CD4-positive, alpha-beta memory T cell (primary cell): ENCODE measurements at regions of chr22 and their contacts with region 1.

Region 1: GRCh38 chr22:39946503-39947219 is 13.5 kb upstream of the TMA7B start:
- DNase-seq: no peak
- H3K4me3 ChIP-seq: no peak overlapping the region
- H3K4me3 Mint-ChIP-seq: peak overlapping the region; percentile 29 to 62 (median 43)
- H3K27ac ChIP-seq: peak overlapping the region; percentile 6
- H3K27ac Mint-ChIP-seq: peak overlapping the region in 6 of 7 donors; percentile 60 to 94 (median 86)
- H3K4me1 ChIP-seq: peaks cover 100% of the 10 kb centered on the region
- H3K4me1 Mint-ChIP-seq: peaks cover 76 to 100% (median 90%) of the 10 kb centered on the region in 4 donors
- H3K27me3 ChIP-seq: no peaks in the 10 kb centered on the region
- H3K27me3 Mint-ChIP-seq: no peaks in the 10 kb centered on the region

Region 2: GRCh38 chr22:39559454-39560105 is 387.1 kb before region 1 on chr22:
- CTCF ChIA-PET with region 1: interaction called, 5 read pairs
- POLR2A ChIA-PET with region 1: no interaction called
- intact Hi-C with region 1: loop called (anchors 10 kb)
- DNase-seq: no peak
- H3K4me3 ChIP-seq: no peak overlapping the region
- H3K4me3 Mint-ChIP-seq: peak overlapping the region in 1 of 8 donors; percentile 23
- H3K27ac ChIP-seq: no peak overlapping the region
- H3K27ac Mint-ChIP-seq: no peak overlapping the region
- H3K4me1 ChIP-seq: peaks cover 6% of the 10 kb centered on the region
- H3K4me1 Mint-ChIP-seq: peaks cover 0 to 9% (median 2%) of the 10 kb centered on the region in 4 donors
- H3K27me3 ChIP-seq: peaks cover 21% of the 10 kb centered on the region
- H3K27me3 Mint-ChIP-seq: peaks cover 19 to 26% of the 10 kb centered on the region in 2 donors

Region 3: DNA sequence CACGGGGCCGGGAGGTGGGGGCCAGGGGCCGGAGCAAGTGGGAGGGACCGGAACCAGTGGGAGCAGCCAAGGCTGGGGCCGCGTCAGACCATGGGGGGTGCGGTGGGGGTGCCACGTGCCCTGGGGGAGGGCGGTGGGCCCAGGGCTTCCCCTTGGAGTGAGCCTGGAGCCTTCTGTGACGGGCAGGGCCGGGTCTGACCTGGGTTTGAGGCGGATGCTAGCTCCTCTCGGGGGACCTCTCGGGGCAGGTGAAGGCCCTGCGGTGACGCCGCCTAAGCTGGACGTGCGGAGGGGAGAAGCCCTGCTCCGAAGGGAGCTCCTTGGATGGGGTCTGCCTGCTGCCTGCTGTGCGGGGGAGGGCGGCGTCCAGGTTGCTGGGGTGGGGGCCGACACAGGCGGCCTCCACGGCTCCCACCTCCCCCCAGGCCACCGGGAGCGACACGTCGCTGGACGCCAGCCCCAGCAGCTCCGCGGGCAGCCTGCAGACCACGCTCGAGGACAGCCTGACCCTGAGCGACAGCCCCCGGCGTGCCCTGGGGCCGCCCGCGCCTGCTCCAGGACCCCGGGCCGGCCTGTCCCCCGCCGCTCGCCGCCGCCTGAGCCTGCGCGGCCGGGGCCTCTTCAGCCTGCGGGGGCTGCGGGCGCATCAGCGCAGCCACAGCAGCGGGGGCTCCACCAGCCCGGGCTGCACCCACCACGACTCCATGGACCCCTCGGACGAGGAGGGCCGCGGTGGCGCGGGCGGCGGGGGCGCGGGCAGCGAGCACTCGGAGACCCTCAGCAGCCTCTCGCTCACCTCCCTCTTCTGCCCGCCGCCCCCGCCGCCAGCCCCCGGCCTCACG is 261.1 kb before region 1 on chr22:
- CTCF ChIA-PET with region 1: no interaction called
- POLR2A ChIA-PET with region 1: no interaction called
- intact Hi-C with region 1: loop called (anchors 10 kb)
- DNase-seq: no peak
- H3K4me3 ChIP-seq: no peak overlapping the region
- H3K4me3 Mint-ChIP-seq: no peak overlapping the region
- H3K27ac ChIP-seq: no peak overlapping the region
- H3K27ac Mint-ChIP-seq: no peak overlapping the region
- H3K4me1 ChIP-seq: no peaks in the 10 kb centered on the region
- H3K4me1 Mint-ChIP-seq: peaks cover 0 to 7% (median 5%) of the 10 kb centered on the region in 4 donors
- H3K27me3 ChIP-seq: no peaks in the 10 kb centered on the region
- H3K27me3 Mint-ChIP-seq: no peaks in the 10 kb centered on the region

Region 4: GRCh38 chr22:39927544-39927943 is 19.1 kb before region 1 on chr22:
- CTCF ChIA-PET with region 1: interaction called, 17 read pairs
- POLR2A ChIA-PET with region 1: interaction called, 9 read pairs
- intact Hi-C with region 1: no loop called
- DNase-seq: no peak
- H3K4me3 ChIP-seq: peak overlapping the region; percentile 22 to 27
- H3K4me3 Mint-ChIP-seq: no peak overlapping the region
- H3K27ac ChIP-seq: peak overlapping the region; percentile 49
- H3K27ac Mint-ChIP-seq: peak overlapping the region in 1 of 7 donors; percentile 92
- H3K4me1 ChIP-seq: peaks cover 100% of the 10 kb centered on the region
- H3K4me1 Mint-ChIP-seq: peaks cover 36 to 42% (median 40%) of the 10 kb centered on the region in 4 donors
- H3K27me3 ChIP-seq: no peaks in the 10 kb centered on the region
- H3K27me3 Mint-ChIP-seq: no peaks in the 10 kb centered on the region

Region 5: GRCh38 chr22:39932918-39933649 is 13.6 kb before region 1 on chr22:
- CTCF ChIA-PET with region 1: interaction called, 17 read pairs
- POLR2A ChIA-PET with region 1: interaction called, 16 read pairs
- intact Hi-C with region 1: no loop called
- DNase-seq: peak in 4 of 5 donors; percentile 55 to 61 (median 58)
- H3K4me3 ChIP-seq: no peak overlapping the region
- H3K4me3 Mint-ChIP-seq: peak overlapping the region; percentile 61 to 88 (median 79)
- H3K27ac ChIP-seq: peak overlapping the region; percentile 53
- H3K27ac Mint-ChIP-seq: peak overlapping the region in 6 of 7 donors; percentile 92 to 97 (median 96)
- H3K4me1 ChIP-seq: peaks cover 100% of the 10 kb centered on the region
- H3K4me1 Mint-ChIP-seq: peaks cover 55 to 56% (median 55%) of the 10 kb centered on the region in 4 donors
- H3K27me3 ChIP-seq: no peaks in the 10 kb centered on the region
- H3K27me3 Mint-ChIP-seq: no peaks in the 10 kb centered on the region

Region 6: DNA sequence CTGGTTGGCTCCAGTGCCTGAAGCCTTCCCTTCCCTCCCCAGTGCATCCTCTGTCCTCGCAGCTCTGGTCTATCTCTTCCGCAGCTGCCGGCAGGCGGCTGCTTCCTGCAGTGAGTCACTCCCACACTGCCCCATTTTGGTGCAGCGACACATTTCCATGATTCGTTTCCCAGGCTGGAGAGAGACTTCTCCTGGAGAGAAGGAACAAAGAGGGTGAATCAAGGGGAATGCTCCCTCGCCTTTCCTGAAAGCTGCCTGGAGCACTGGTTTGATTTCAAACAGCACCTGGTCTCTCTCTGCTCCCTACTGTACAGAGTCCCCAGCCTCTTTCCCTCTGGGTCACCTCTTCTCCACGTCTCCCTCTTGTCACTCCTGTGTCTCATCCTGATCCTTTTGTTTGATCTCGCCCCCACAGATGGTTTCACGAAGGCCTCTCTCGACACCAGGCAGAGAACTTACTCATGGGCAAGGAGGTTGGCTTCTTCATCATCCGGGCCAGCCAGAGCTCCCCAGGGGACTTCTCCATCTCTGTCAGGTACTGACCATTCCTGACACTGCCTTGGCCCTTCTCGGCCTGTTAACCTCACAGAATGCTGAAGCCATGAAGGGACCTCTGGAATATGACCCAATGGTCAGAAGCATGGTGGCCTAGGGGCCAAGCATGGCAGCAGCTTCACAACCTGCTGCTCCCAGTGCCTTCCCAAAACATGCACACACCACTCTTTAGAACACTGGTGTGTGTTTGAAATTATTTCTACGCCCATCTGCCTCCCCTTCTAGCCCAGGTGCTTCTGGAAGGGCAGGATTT is 13.2 kb after region 1 on chr22 and contains the start of gene TMA7B:
- CTCF ChIA-PET with region 1: interaction called, 10 read pairs
- POLR2A ChIA-PET with region 1: interaction called, 4 read pairs
- intact Hi-C with region 1: loop called (anchors 2 kb)
- DNase-seq: peak in 3 of 5 donors; percentile 35 to 66 (median 36)
- H3K4me3 ChIP-seq: no peak within 1 kb of the TSS
- H3K4me3 Mint-ChIP-seq: peak within 1 kb of the TSS in 7 of 8 donors; percentile 23 to 59 (median 37)
- H3K27ac ChIP-seq: peak within 1 kb of the TSS; percentile 53
- H3K27ac Mint-ChIP-seq: peak within 1 kb of the TSS; percentile 61 to 96 (median 90)
- H3K4me1 ChIP-seq: peaks cover 64% of the 10 kb centered on the region
- H3K4me1 Mint-ChIP-seq: peaks cover 48 to 68% (median 60%) of the 10 kb centered on the region in 4 donors
- H3K27me3 ChIP-seq: no peaks in the 10 kb centered on the region
- H3K27me3 Mint-ChIP-seq: no peaks in the 10 kb centered on the region
- total RNA-seq, gene TMA7B: 9.3 to 10.2 TPM

Region 7: GRCh38 chr22:40363059-40363458 is 416.4 kb after region 1 on chr22:
- CTCF ChIA-PET with region 1: no interaction called
- POLR2A ChIA-PET with region 1: no interaction called
- intact Hi-C with region 1: no loop called
- DNase-seq: no peak
- H3K4me3 ChIP-seq: no peak overlapping the region
- H3K4me3 Mint-ChIP-seq: no peak overlapping the region
- H3K27ac ChIP-seq: no peak overlapping the region
- H3K27ac Mint-ChIP-seq: peak overlapping the region in 5 of 7 donors; percentile 12 to 87 (median 46)
- H3K4me1 ChIP-seq: no peaks in the 10 kb centered on the region
- H3K4me1 Mint-ChIP-seq: peaks cover 0 to 9% (median 4%) of the 10 kb centered on the region in 4 donors
- H3K27me3 ChIP-seq: no peaks in the 10 kb centered on the region
- H3K27me3 Mint-ChIP-seq: no peaks in the 10 kb centered on the region